Natural killer cell (primary cell): ENCODE measurements at regions of chr7 and their contacts with region 1.

Region 1: DNA sequence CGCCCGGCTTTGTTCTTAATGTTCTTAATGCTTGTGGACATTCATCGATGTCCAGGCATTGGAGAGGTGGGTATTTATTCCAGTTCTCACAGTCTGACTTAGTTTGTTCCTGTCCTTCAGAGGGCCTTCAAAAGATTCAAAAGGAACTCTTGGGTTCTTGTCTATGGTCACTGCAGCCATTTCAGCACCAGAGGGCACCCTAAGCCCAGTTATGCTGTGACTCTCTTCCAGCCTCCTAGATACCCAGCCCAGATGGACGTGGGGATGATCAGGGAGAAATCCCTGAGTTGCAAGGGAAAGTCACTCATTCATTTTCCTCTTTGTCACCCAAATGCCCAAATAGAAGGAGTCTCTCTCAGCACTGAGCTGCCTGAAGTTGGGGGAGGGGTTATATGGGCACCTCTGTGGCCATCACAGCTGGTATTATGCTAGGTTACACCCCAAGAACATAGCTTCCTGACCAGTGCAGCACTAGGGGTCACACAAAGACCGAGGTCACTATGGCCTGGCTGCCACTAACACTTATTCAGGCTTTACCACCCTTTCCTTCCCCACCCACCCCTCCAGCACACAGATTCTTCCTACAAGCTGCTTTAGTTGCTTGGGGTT is 26.5 kb upstream of the CCDC126 start:
- DNase-seq: peak; percentile 61 to 78
- ATAC-seq: peak; percentile 88 to 99 (median 99)
- H3K4me3 ChIP-seq: no peak overlapping the region
- H3K4me3 Mint-ChIP-seq: no peak overlapping the region
- H3K27ac ChIP-seq: no peak overlapping the region
- H3K27ac Mint-ChIP-seq: peak overlapping the region in 1 of 2 donors; percentile 38
- H3K4me1 ChIP-seq: no peaks in the 10 kb centered on the region
- H3K4me1 Mint-ChIP-seq: peaks cover 0 to 5% of the 10 kb centered on the region in 2 donors
- H3K27me3 ChIP-seq: no peaks in the 10 kb centered on the region
- H3K27me3 Mint-ChIP-seq: peaks cover 7 to 24% of the 10 kb centered on the region in 2 donors
- CTCF ChIP-seq: peak; percentile 79

Region 2: DNA sequence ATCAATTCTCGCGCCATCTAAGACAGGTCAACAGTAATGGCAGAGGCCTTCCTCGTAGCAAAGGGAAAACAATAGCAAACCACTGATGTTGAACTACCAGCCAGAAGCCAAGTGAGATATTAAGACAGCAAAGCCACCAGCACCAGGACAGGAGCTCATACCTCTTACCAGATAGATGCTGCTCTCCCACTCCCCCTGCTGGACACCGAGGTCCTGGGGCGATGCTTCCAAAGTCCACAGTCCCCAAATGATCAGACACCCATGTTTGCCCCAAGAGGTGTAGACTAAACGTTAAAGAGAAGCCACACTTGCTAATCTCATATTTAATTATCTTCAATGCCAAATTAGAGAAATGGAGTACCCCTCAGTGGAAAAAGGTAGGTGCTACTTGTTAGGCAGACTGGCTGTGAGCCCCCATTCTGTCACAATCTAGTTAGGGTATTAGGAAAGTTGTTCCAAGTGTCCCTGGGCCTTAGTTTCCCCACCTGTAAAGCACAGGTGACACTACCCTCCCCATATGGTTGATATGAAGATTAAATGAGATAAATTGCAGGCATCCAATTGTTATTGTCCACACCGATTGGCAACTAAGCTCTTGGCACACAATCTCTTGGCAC is 788.0 kb before region 1 on chr7:
- intact Hi-C with region 1: no loop called
- DNase-seq: peak; percentile 43 to 80
- ATAC-seq: peak; percentile 64 to 89 (median 82)
- H3K4me3 ChIP-seq: no peak overlapping the region
- H3K4me3 Mint-ChIP-seq: no peak overlapping the region
- H3K27ac ChIP-seq: no peak overlapping the region
- H3K27ac Mint-ChIP-seq: no peak overlapping the region
- H3K4me1 ChIP-seq: no peaks in the 10 kb centered on the region
- H3K4me1 Mint-ChIP-seq: no peaks in the 10 kb centered on the region
- H3K27me3 ChIP-seq: no peaks in the 10 kb centered on the region
- H3K27me3 Mint-ChIP-seq: peaks cover 4 to 5% of the 10 kb centered on the region in 2 donors
- CTCF ChIP-seq: peak; percentile 77

Region 3: DNA sequence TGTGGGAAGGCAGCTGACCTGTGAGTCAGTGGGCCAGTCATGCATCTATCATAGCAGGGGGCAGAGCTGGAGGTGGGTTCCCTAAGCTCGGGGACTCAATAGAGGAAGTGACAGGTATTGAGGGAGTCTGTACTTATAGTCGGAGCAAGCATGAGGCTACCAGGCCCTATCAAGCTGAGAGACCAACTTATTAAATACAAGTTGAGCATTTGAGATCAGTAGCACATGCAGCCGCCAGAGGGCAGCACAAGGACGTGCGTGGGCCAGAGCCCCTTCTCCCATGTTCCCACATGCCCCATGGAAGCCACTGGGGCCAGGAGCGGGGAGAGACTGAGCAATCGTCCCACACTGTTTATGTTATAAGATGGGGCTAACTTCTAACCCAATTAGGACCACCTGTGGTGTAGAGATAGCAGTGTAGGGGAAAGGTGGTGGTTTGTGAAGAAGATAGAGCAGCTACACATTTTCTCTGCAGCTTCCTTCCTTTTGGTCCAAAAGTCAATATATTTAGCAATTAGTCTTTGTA is 126.3 kb after region 1 on chr7:
- intact Hi-C with region 1: loop called (anchors 5 kb)
- DNase-seq: peak; percentile 50 to 76
- ATAC-seq: peak; percentile 71 to 75 (median 75)
- H3K4me3 ChIP-seq: no peak overlapping the region
- H3K4me3 Mint-ChIP-seq: no peak overlapping the region
- H3K27ac ChIP-seq: no peak overlapping the region
- H3K27ac Mint-ChIP-seq: no peak overlapping the region
- H3K4me1 ChIP-seq: no peaks in the 10 kb centered on the region
- H3K4me1 Mint-ChIP-seq: peaks cover 7 to 9% of the 10 kb centered on the region in 2 donors
- H3K27me3 ChIP-seq: no peaks in the 10 kb centered on the region
- H3K27me3 Mint-ChIP-seq: no peaks in the 10 kb centered on the region
- CTCF ChIP-seq: peak; percentile 79

Region 4: DNA sequence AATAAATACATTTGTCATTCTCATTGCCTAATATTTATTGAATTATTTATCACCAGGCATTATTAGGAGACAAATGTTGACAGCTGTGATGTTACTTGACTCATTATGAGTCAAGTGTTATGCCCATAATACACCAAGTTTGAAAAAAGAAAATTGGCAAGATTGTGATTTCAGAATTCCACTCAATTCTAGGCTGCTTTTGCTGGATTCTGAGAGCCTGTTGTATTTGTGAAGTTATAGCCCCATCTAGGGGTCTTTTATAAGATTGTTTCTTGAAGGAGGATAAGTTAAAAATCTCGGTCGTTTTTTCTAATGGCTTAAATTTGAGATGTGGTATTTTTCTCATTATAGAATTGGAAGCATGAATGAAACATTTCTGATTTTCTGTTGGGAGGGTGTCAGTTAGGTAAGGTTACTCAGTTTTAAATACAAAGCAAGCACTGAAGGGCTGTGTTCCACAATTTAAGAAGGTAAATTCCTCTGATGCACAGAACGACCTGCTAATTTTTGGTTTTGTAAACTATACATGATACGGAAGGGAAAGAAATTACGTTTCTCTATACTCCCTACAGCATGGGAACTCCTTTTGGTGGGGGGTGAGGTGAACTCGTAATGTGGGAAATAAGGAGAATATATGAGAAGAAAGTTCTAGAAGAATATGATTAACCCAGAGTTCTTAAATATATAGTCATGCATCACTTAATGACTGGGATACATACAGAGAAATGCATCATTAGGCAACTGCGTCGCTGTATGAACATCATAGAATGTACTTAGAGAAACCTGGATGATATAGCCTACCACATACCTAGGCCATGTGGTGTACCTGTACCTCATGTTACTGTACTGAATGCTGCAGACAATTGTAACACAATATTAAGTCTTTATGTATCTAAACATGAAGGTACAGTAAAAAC is 141.9 kb after region 1 on chr7:
- intact Hi-C with region 1: loop called (anchors 1 kb)
- DNase-seq: peak in 1 of 2 donors; percentile 72
- ATAC-seq: no peak
- H3K4me3 ChIP-seq: no peak overlapping the region
- H3K4me3 Mint-ChIP-seq: no peak overlapping the region
- H3K27ac ChIP-seq: no peak overlapping the region
- H3K27ac Mint-ChIP-seq: no peak overlapping the region
- H3K4me1 ChIP-seq: no peaks in the 10 kb centered on the region
- H3K4me1 Mint-ChIP-seq: peaks cover 0 to 5% of the 10 kb centered on the region in 2 donors
- H3K27me3 ChIP-seq: peaks cover 2% of the 10 kb centered on the region
- H3K27me3 Mint-ChIP-seq: peaks cover 0 to 5% of the 10 kb centered on the region in 2 donors
- CTCF ChIP-seq: peak; percentile 71